ENCODE measurements at regions of chr14 and their contacts with region 1.

Region 1: DNA sequence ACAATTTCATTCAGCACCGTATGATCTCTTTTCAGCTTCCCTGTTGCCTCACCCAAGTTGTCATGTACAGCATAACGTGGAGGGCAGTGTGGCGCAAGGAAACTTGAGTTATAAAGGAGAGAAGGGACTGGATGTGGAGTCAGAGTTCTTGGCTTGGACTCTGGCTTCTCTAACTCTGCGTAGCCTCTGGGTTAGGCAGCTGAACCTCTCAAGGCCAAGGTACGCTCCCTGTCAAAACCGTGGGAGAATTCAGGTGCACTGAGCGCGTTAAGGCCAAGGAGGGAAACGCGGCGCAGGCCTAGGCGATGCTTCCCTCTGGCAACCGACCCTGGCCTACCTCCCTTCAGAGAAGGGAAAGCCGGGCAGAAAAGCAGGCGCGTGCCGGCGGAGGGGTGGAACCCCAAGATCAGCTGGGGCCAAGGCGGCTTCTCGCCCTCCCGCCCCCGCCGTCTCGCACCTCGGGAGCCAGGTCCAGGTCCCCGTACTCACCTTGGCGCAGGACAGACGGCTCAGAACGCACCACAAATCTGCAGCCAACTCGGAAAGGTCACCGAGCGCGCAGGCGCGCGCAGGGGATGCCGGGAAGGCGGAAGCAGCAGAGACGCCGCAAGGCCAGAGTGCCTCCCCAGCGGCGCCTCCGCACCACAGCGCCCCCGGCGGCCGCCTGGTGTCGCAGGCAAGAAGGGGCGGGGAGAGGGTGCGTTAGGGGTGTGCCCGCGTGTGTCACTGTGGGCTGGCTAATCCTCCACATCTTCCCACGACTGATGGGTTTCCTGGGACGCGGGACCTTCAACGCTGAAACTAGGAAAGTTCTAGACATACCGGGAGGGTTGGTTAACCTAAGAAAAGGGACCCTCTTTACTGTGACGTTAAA is 7.0 kb upstream of the TDRD9 start:
- DNase-seq: peak; percentile 97
- ATAC-seq: peak; percentile 99
- H3K4me3 Mint-ChIP-seq: peak overlapping the region; percentile 85
- H3K27ac Mint-ChIP-seq: peak overlapping the region; percentile 80
- H3K4me1 Mint-ChIP-seq: peaks cover 12% of the 10 kb centered on the region
- H3K27me3 Mint-ChIP-seq: peaks cover 6% of the 10 kb centered on the region

Region 2: GRCh38 chr14:103520657-103521437 is 400.4 kb before region 1 on chr14:
- CTCF ChIA-PET with region 1: no interaction called
- POLR2A ChIA-PET with region 1: no interaction called
- intact Hi-C with region 1: loop called in 1 of 2 experiments (anchors 2 kb)
- DNase-seq: peak; percentile 74
- ATAC-seq: peak; percentile 45
- H3K4me3 Mint-ChIP-seq: peak overlapping the region; percentile 39
- H3K27ac Mint-ChIP-seq: no peak overlapping the region
- H3K4me1 Mint-ChIP-seq: peaks cover 10% of the 10 kb centered on the region
- H3K27me3 Mint-ChIP-seq: peaks cover 12% of the 10 kb centered on the region

Region 3: GRCh38 chr14:103628684-103629502 is 292.3 kb before region 1 on chr14 and contains the start of gene KLC1:
- CTCF ChIA-PET with region 1: no interaction called
- POLR2A ChIA-PET with region 1: no interaction called
- intact Hi-C with region 1: loop called in 1 of 2 experiments (anchors 1 kb)
- DNase-seq: peak; percentile 92
- ATAC-seq: peak; percentile 77
- H3K4me3 Mint-ChIP-seq: peak within 1 kb of the TSS; percentile 87
- H3K27ac Mint-ChIP-seq: peak within 1 kb of the TSS; percentile 81
- H3K4me1 Mint-ChIP-seq: peaks cover 35% of the 10 kb centered on the region
- H3K27me3 Mint-ChIP-seq: no peaks in the 10 kb centered on the region
- total RNA-seq, gene KLC1: 97.4 to 113 TPM

Region 4: GRCh38 chr14:103871596-103872480 is 49.4 kb before region 1 on chr14:
- CTCF ChIA-PET with region 1: no interaction called
- POLR2A ChIA-PET with region 1: no interaction called
- intact Hi-C with region 1: loop called in 1 of 2 experiments (anchors 1 kb)
- DNase-seq: peak; percentile 85
- ATAC-seq: peak; percentile 86
- H3K4me3 Mint-ChIP-seq: peak overlapping the region; percentile 79
- H3K27ac Mint-ChIP-seq: peak overlapping the region; percentile 79
- H3K4me1 Mint-ChIP-seq: peaks cover 12% of the 10 kb centered on the region
- H3K27me3 Mint-ChIP-seq: no peaks in the 10 kb centered on the region

Region 5: GRCh38 chr14:104078031-104078455 is 156.8 kb after region 1 on chr14:
- CTCF ChIA-PET with region 1: interaction called, 3 read pairs
- POLR2A ChIA-PET with region 1: no interaction called
- intact Hi-C with region 1: loop called in 1 of 2 experiments (anchors 1 kb)
- DNase-seq: peak; percentile 92
- ATAC-seq: peak; percentile 98
- H3K4me3 Mint-ChIP-seq: no peak overlapping the region
- H3K27ac Mint-ChIP-seq: peak overlapping the region; percentile 47
- H3K4me1 Mint-ChIP-seq: peaks cover 15% of the 10 kb centered on the region
- H3K27me3 Mint-ChIP-seq: peaks cover 6% of the 10 kb centered on the region